ENCODE measurements at regions of chr6 and their contacts with region 1.

Region 1: DNA sequence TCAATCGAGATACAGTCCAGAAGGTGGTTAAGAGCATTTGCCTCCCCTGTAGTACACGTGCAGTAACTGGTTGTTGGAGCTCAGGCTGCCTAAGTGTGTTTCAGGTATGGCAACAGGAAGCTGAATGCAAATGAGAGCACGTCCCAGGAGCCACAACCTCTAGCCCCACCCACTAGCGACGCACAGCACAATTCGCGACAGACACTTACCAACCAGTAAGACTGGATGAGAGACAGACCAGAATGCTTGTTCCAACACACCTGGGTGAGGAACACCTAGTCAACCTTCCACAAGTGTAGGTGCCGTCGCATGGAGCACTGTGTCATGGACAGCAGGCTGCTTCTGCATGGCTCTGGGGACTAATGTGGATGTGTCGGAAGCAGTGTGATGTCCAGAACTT is 7.2 kb upstream of the SERPINB1 start:
- DNase-seq: peak; percentile 64
- H3K4me3 Mint-ChIP-seq: peak overlapping the region; percentile 51
- H3K27ac Mint-ChIP-seq: peak overlapping the region; percentile 73
- H3K4me1 Mint-ChIP-seq: peaks cover 50% of the 10 kb centered on the region
- H3K27me3 Mint-ChIP-seq: no peaks in the 10 kb centered on the region

Region 2: DNA sequence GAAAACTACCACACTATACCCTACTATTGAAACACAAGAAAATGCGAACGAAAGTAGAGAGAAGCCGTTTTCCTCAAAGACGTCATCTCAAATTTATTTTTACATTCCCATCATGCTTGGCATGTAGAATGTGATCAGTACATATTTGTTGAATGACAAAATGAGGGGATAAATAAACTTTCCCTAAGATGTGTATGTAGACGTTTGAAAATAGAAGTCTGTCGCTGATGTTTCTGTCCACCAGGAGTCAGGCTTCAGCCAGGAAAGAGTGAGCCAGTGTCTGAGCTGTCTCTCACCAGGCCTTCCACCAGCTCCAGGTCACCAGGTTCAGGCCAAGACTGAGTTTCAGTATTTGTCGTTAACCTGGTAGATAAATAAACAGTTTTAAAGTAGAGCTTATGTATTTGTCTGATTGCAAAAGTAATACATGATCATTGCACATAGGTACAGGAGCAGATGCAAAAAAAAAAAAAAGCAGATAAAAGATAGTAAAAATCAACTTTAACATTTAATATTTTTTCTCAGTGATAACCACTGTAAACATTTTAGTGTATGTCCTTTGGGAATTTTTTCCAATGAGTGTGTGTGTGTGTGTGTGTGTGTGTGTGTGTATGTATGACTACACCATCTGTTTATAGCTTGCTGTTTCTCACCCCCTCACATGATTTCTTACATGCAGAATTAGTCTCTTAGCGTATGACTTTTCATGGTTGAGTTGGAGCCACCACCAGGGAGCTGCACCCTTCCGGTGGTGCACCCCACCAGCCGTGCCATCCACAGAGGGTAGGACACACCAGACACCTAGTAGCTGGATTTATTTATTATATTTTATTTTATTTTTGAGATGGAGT is 57.5 kb before region 1 on chr6:
- intact Hi-C with region 1: loop called (anchors 1 kb)
- DNase-seq: peak; percentile 55
- H3K4me3 Mint-ChIP-seq: peak overlapping the region; percentile 41
- H3K27ac Mint-ChIP-seq: peak overlapping the region; percentile 87
- H3K4me1 Mint-ChIP-seq: peaks cover 44% of the 10 kb centered on the region
- H3K27me3 Mint-ChIP-seq: no peaks in the 10 kb centered on the region

Region 3: DNA sequence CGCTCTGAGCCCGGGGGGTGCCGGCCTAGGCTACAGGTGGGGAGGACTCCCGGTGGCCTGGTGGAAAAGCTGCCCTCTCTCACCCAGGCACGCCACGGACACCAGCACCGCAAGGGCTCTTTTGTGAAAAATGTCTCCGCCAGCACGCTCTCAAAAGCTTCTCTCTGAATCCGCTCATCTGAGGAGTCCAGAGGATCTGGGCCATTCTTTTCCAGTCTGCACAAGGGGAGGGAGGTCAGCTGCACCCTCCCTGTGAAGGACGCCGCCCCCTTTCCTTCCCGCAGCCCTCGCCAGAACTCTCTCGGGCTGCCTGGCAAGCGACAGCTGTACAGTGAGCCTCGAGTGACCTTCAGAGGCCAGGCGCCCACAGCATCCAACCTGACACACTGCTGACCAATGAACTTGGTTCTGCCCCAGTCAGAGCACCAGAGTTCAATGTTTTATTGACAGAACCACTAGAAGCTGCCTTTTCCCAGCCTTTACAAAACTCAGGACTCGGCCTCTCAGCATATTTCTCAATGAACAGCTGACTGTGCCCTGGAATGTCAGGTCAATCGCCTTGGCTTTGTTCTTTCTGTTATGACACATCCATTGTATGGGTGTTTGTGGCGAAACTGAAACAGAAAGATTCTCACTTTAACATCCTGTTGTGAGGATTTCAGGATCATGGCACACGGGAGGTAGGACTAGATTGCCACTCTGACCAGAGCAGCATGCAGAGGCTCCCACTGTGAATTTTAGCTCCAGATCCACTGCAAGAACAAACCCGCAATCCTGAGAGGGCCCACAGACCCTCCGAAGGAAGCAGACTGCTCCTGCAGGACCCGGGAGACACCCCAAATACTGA is 27.6 kb after region 1 on chr6:
- intact Hi-C with region 1: no loop called
- DNase-seq: no peak
- H3K4me3 Mint-ChIP-seq: peak overlapping the region; percentile 86
- H3K27ac Mint-ChIP-seq: peak overlapping the region; percentile 99
- H3K4me1 Mint-ChIP-seq: peaks cover 65% of the 10 kb centered on the region
- H3K27me3 Mint-ChIP-seq: no peaks in the 10 kb centered on the region

Region 4: GRCh38 chr6:2911171-2911570 is 62.3 kb after region 1 on chr6:
- intact Hi-C with region 1: loop called (anchors 1 kb)
- DNase-seq: no peak
- H3K4me3 Mint-ChIP-seq: no peak overlapping the region
- H3K27ac Mint-ChIP-seq: no peak overlapping the region
- H3K4me1 Mint-ChIP-seq: peaks cover 37% of the 10 kb centered on the region
- H3K27me3 Mint-ChIP-seq: no peaks in the 10 kb centered on the region

Region 5: DNA sequence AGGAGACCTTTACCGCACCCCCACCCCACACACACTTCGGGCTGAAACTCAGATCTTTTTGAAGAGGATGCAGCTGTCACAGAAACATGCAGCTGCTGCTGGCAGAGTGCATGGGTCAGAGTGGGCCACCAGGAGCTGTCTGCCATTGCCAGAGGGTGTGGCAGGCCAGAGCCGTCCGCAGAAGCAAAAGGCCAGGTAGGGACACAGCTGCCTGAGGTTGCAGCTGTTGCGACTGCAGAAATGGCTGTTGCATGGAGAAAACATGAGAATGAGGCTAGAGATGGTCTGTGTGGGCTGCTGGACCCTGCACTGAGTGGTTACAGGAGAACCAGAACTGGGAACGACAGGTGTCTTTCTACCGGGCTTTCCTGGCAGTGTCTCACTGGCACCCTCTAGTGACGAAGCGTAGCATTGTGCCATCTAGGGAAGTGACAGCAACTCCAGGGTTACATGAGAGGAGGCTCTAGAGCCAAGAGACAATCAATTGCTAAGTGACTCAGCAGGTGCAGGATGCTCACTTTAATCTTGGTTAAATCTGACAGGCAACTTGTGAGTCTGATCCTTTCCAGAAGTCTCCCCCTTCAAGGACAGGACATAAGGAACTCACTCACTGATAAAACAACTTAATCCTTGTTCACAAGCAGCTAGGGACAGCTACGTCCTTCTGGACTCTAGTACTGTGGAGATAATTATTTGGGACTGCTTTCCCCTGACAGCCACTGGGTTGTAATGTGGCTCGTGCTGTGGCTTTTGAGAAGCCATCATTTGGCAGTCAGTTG is 83.3 kb after region 1 on chr6:
- intact Hi-C with region 1: loop called (anchors 1 kb)
- DNase-seq: peak; percentile 78
- H3K4me3 Mint-ChIP-seq: no peak overlapping the region
- H3K27ac Mint-ChIP-seq: peak overlapping the region; percentile 54
- H3K4me1 Mint-ChIP-seq: peaks cover 23% of the 10 kb centered on the region
- H3K27me3 Mint-ChIP-seq: no peaks in the 10 kb centered on the region